Common myeloid progenitor, CD34-positive (primary cell): ENCODE measurements at regions of chr18 and their contacts with region 1.

Region 1: DNA sequence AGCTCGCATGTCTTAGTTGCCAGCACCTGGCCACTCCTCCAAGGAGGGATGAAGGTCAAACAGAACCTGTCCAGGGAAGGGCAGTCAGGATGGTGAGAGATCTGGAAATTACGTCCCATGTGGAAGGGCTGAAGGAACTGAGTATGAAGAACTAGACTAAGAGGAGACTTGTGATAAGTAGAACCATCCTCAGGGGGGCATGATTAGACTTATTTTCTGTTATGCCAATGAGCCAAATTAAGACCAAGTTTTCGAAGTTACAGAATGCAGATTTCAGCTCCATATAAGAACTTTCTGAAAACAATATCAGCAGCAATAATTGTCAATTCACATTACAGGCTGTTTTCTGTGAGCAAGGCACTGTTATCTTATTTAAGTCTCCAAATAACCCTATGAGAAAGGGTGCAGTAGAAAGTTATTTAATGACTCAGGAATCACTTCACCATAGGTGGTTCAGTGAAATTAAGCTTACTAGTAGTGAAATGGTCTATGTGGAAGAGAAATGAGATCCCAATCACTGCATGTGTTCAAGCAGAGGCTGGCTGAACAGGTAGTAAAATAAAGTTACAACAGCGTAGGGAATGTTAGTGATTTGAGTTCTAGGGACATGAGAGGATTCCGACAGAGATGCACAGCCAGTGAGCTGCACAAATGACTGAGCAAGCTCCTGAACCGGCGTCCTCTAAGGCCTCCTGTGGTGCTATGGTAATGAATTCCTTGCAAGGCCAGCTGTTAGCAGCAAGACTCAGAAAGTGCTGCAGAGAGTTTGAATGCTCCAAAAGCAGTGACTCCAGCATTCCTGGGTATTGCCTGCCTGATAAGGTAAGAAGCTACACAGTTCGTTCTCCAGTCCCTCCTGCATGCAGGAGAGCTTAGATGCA is 4.5 kb upstream of the DYM start:
- DNase-seq: peak; percentile 52 to 66 (median 55)
- H3K4me3 ChIP-seq: no peak overlapping the region
- H3K27ac ChIP-seq: no peak overlapping the region
- H3K4me1 ChIP-seq: peaks cover 0 to 5% (median 2%) of the 10 kb centered on the region in 4 experiments
- H3K27me3 ChIP-seq: no peaks in the 10 kb centered on the region

Region 2: DNA sequence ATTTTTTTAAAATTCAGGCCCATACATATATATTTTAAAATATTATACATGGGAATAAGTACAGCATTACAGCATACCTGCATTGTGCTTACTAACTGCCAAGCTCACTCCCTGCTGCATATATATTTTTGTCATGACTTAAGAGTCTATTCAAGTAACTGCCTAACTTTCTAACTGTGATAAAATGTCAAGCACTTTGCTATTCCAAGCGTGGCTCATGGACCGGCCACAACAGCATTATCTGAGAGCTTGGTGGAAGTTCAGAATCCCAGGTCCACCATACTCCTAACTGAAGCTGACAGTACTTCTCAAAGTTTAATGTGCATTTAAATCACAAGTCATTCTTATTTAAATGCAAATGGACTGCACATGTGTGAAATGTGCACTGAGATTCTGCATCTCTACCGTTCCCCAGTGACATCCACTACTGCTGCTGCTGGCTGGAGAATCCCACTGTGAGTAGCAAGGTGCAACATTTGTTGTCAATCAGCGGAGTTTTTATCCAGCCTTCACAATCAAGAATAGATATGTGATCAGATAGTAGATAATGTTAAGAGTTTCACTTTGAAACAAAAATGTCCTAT is 83.6 kb before region 1 on chr18:
- CTCF ChIA-PET with region 1: no interaction called
- POLR2A ChIA-PET with region 1: no interaction called
- DNase-seq: no peak
- H3K4me3 ChIP-seq: no peak overlapping the region
- H3K27ac ChIP-seq: no peak overlapping the region
- H3K4me1 ChIP-seq: no peaks in the 10 kb centered on the region
- H3K27me3 ChIP-seq: no peaks in the 10 kb centered on the region

Region 3: GRCh38 chr18:49476664-49477411 is 11.9 kb after region 1 on chr18:
- CTCF ChIA-PET with region 1: interaction called, 26 read pairs
- POLR2A ChIA-PET with region 1: interaction called, 4 read pairs
- DNase-seq: peak; percentile 73 to 89 (median 84)
- H3K4me3 ChIP-seq: peak overlapping the region in 6 of 7 experiments; percentile 17 to 58 (median 36)
- H3K27ac ChIP-seq: peak overlapping the region in 1 of 2 experiments; percentile 54
- H3K4me1 ChIP-seq: peaks cover 5 to 23% (median 16%) of the 10 kb centered on the region in 4 experiments
- H3K27me3 ChIP-seq: no peaks in the 10 kb centered on the region

Region 4: GRCh38 chr18:49486953-49487710 is 22.2 kb after region 1 on chr18 and contains the start of gene C18orf32:
- CTCF ChIA-PET with region 1: interaction called, 48 read pairs
- POLR2A ChIA-PET with region 1: interaction called, 14 read pairs
- DNase-seq: peak; percentile 95 to 97 (median 97)
- H3K4me3 ChIP-seq: peak within 1 kb of the TSS; percentile 59 to 99 (median 93)
- H3K27ac ChIP-seq: peak within 1 kb of the TSS; percentile 90 to 93
- H3K4me1 ChIP-seq: peaks cover 17 to 44% (median 36%) of the 10 kb centered on the region in 4 experiments
- H3K27me3 ChIP-seq: no peaks in the 10 kb centered on the region

Region 5: GRCh38 chr18:49495076-49495475 is 30.1 kb after region 1 on chr18:
- CTCF ChIA-PET with region 1: interaction called, 13 read pairs
- POLR2A ChIA-PET with region 1: no interaction called
- DNase-seq: no peak
- H3K4me3 ChIP-seq: no peak overlapping the region
- H3K27ac ChIP-seq: no peak overlapping the region
- H3K4me1 ChIP-seq: peaks cover 7 to 23% (median 16%) of the 10 kb centered on the region in 4 experiments
- H3K27me3 ChIP-seq: peaks cover 0 to 8% (median 0%) of the 10 kb centered on the region in 5 experiments

Region 6: DNA sequence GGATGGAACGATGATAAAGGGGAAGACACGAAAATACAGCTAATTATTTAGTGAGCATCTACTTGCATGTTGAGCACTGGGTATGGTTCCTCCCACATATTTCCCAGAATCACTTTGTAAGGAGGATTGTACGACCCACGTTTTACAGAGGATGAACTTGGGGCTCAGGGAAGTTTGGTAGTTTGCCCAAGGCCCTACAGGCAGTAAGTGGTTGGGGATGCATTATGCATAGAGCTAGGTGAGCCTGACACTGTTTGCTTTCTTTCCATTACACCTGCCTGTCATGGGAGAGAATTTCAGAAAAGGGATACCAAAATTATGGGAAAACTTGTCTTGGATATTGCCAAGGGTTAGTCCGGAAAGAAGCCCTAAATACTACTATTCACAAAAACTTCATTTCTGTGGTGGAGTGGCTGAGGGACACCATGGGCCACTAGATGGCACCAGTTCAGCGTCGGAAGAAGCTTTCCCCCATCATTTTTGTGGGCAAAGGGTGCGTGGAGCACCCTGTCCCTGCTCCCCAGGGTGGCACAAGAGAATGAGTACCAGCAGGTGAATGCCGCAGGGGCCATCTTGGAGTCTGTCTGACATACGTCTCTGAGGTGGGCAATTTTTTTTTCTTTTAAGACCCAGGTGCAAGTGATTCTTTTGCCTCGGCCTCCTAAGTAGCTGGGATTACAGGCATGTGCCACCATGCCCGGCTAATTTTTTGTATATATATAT is 45.6 kb after region 1 on chr18:
- CTCF ChIA-PET with region 1: interaction called, 27 read pairs
- POLR2A ChIA-PET with region 1: no interaction called
- DNase-seq: peak; percentile 59 to 68 (median 61)
- H3K4me3 ChIP-seq: no peak overlapping the region
- H3K27ac ChIP-seq: no peak overlapping the region
- H3K4me1 ChIP-seq: peaks cover 0 to 2% (median 0%) of the 10 kb centered on the region in 4 experiments
- H3K27me3 ChIP-seq: peaks cover 0 to 4% (median 2%) of the 10 kb centered on the region in 5 experiments

Region 7: GRCh38 chr18:49725809-49726674 is 261.1 kb after region 1 on chr18:
- CTCF ChIA-PET with region 1: no interaction called
- POLR2A ChIA-PET with region 1: no interaction called
- DNase-seq: no peak
- H3K4me3 ChIP-seq: no peak overlapping the region
- H3K27ac ChIP-seq: no peak overlapping the region
- H3K4me1 ChIP-seq: no peaks in the 10 kb centered on the region
- H3K27me3 ChIP-seq: peaks cover 0 to 11% (median 2%) of the 10 kb centered on the region in 5 experiments

Region 8: DNA sequence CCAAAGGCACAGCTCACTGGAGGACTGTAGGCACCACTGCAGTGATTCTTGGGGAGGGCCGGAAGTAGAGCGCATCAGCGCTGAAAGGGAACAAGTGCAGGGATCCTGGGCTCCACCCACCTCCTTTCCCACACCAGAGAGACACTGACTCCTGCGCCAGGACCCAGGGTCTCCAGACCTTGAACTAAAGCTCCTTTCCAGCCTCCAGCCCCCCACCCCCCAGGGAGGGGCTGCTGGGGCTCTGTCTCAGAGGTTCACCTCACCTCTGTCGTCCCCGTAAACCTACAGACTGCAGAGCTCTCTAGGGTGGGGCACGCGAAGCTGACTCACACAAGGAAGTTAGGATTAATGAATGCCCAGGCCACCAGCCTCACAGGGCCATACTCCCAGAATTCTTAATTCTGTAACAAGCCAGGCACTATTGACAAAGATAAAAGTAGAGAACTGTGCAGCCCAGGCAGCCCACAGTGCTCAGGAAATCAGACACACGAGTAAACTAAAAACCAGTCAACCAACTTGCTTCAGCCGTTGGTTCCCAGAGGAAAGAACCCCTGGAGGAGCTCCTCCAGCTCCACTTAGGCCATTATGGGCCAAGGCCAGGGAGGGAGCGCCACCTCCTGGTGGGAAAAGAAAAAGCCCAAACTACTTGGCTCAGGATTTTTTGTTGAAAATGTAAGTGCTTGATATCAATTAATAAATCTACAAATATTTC is 393.5 kb after region 1 on chr18:
- CTCF ChIA-PET with region 1: interaction called, 13 read pairs
- POLR2A ChIA-PET with region 1: no interaction called
- DNase-seq: peak; percentile 46 to 67 (median 52)
- H3K4me3 ChIP-seq: no peak overlapping the region
- H3K27ac ChIP-seq: no peak overlapping the region
- H3K4me1 ChIP-seq: no peaks in the 10 kb centered on the region
- H3K27me3 ChIP-seq: peaks cover 0 to 10% (median 0%) of the 10 kb centered on the region in 5 experiments